Activated CD4-positive, alpha-beta T cell treated with anti-CD3 and anti-CD28 coated beads for 36 hours (primary cell): ENCODE measurements at regions of chr13 and their contacts with region 1.

Region 1: DNA sequence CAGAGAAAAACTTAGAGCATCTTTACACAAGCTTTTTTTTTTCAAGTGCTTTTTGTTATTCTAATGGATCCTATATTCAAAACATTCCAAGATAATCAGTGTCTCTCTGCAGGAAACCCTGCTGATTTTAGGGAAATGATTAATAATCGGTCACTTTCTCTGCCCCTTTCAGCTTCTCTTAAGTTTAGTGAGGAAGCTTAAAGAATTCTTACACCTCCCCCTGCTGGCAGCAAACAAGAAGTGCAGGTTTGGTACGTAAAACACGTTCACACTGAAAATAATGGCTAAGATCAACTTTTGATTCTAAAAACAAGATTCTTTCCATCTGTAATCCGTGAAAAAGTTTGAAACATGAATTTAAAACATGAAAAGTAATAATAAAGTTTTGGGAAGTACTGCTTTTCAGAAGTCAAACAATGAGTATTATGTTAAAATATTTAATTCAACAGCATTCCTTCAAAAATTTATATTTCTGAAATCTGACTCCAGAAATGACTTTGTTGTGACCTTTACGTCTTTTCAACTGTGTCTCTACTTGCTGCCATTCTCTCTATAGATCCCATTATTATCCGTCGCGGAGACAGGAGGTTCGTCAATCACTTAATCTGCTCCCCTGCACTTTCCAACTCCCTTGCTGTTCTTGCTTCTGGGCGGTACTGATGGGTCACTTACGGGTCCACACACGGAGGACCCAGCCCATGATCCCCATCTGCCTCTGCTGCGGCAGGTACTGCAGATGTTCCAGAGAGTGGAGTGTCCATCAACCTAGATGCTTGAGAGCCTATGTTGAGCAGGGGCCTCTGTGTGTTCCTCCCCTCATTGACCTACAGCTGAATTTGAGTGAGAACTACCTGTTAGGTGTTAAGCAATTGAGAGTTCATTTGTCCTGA is 203.1 kb upstream of the EDNRB start:
- DNase-seq: peak; percentile 46
- ATAC-seq: no peak
- H3K4me3 Mint-ChIP-seq: no peak overlapping the region
- H3K27ac Mint-ChIP-seq: no peak overlapping the region
- H3K4me1 Mint-ChIP-seq: no peaks in the 10 kb centered on the region
- H3K27me3 Mint-ChIP-seq: peaks cover 12% of the 10 kb centered on the region

Region 2: GRCh38 chr13:78131811-78132210 is 10.1 kb after region 1 on chr13:
- CTCF ChIA-PET with region 1: interaction called, 13 read pairs
- POLR2A ChIA-PET with region 1: no interaction called
- intact Hi-C with region 1: no loop called
- DNase-seq: no peak
- ATAC-seq: no peak
- H3K4me3 Mint-ChIP-seq: no peak overlapping the region
- H3K27ac Mint-ChIP-seq: no peak overlapping the region
- H3K4me1 Mint-ChIP-seq: no peaks in the 10 kb centered on the region
- H3K27me3 Mint-ChIP-seq: peaks cover 9% of the 10 kb centered on the region